PC-3 (cell line): ENCODE measurements at regions of chr14 and their contacts with region 1.

Region 1: GRCh38 chr14:58199726-58200479 is at the start of gene ACTR10:
- DNase-seq: peak; percentile 99
- ATAC-seq: peak; percentile 94
- H3K4me3 ChIP-seq: peak within 1 kb of the TSS; percentile 88
- H3K27ac ChIP-seq: peak within 1 kb of the TSS; percentile 55
- H3K4me1 ChIP-seq: peaks cover 15% of the 10 kb centered on the region; the same call in 1 of the 2 replicates
- H3K27me3 ChIP-seq: peaks cover 10% of the 10 kb centered on the region; the same call in 1 of the 2 replicates
- CTCF ChIP-seq: no peak
- total RNA-seq, gene ACTR10: 118 and 126 TPM in 2 replicates

Region 2: DNA sequence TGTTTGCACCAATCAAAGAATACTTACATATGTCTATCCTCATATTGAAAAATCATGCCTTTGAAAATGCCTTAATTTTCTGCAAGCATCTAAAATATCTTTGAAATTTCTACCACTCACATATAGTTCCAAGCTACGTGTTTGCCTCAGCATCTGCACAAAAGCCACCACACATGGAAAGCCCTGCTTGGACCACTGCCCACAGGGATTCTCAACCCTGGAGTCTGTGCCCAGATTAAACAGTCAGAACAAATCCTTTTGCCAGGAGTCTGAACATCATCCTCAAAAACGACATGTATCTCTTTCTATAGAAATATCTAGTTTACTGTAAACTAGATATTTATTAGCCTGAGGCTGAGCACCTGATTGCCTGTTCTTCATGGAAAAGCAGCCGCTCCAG is 80.5 kb before region 1 on chr14:
- CTCF ChIA-PET with region 1: no interaction called
- POLR2A ChIA-PET with region 1: no interaction called
- intact Hi-C with region 1: no loop called
- DNase-seq: no peak
- ATAC-seq: no peak
- H3K4me3 ChIP-seq: no peak overlapping the region
- H3K27ac ChIP-seq: no peak overlapping the region
- H3K4me1 ChIP-seq: peaks cover 23% of the 10 kb centered on the region
- H3K27me3 ChIP-seq: peaks cover under 1% of the 10 kb centered on the region; the same call in 1 of the 2 replicates
- CTCF ChIP-seq: no peak

Region 3: DNA sequence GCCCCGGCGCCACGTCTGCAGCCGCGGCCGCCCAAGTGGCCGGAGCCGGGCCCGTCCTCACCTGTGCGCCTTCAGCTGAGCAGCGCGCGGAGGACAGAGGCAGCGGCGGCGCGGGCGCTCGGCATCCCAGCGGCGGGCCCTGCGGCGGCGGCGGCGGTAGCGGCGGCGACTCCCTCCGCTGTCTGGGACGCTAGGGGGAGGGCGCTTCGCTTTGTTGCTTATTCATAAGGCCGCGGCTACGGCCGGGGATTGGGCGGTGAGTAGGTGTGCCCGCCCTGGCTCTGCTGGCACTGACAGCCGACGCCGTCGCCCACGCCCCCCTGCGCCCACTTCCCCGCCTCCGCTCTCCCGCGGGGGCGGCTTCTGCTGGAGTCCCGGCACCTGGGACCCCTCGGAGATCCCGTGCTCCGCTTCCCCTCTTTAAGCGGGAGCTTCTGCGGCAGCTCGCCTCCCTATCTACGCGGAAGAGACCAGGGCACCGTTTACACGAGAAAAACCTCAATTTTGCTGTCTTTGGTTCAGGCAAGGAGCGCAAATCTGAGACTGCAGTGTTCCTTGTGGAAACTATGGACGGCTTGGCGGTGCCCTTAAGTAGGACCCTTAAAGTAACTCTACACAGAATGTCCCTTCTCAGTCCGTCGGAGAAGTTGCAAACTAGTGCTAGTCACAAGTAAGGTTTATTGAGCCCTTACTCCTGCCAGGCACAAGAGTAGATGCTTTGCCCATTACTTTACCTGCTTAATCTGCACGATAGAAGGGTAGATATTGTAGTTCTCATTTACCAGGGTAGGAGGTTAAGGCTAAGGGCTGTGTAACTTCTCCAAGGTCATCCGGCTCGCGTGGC is 47.7 kb before region 1 on chr14 and contains the start of gene ARMH4:
- CTCF ChIA-PET with region 1: no interaction called
- POLR2A ChIA-PET with region 1: no interaction called
- intact Hi-C with region 1: loop called (anchors 2 kb)
- DNase-seq: peak; percentile 98
- ATAC-seq: peak; percentile 95
- H3K4me3 ChIP-seq: peak within 1 kb of the TSS; percentile 73
- H3K27ac ChIP-seq: no peak within 1 kb of the TSS
- H3K4me1 ChIP-seq: peaks cover 12% of the 10 kb centered on the region
- H3K27me3 ChIP-seq: peaks cover 47% of the 10 kb centered on the region
- CTCF ChIP-seq: no peak; the same call in 1 of the 2 replicates
- total RNA-seq, gene ARMH4: 2.6 and 3.3 TPM in 2 replicates

Region 4: DNA sequence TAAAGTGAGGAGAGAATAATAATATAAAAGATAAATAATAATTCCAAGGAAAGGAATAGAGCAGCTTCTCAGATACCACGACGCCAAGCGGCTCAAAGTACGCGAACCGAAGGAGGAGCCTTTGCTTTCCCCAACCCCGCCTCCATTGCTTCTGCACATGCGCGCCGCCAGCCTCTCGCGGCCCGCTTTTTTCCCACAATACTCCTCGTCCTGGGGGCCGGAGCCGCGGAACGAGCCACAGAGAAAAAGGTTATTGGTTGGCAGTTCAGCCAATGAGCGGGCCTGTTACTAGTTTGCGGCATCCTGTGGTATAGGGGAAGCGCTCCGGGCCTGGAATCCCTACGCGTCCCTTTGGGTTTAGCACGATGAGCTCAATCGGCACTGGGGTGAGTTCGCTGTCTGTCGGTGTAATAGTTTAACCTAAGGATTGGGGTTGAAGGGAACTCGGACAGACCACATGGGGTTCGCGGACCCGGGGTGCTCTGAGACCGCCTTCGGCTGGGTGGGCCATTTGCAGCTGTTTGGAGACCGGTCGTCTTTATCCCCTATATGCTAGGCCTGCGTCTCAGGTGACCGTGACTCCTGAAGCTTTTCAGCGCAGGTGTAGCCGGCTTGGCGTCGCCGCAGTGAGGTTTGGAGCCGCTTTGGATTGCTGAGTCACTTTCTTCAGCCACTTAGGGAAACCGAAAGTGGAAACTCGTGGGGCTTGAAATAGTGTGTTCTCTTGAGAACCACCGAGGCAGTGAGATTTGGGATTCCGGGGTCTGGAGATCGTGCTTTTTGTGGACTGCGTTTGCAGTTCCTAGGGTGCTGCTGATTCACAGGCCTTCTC is 44.9 kb after region 1 on chr14 and contains the start of gene PSMA3:
- CTCF ChIA-PET with region 1: no interaction called
- POLR2A ChIA-PET with region 1: no interaction called
- intact Hi-C with region 1: loop called (anchors 1 kb)
- DNase-seq: peak; percentile 100
- ATAC-seq: peak; percentile 87
- H3K4me3 ChIP-seq: peak within 1 kb of the TSS; percentile 76
- H3K27ac ChIP-seq: peak within 1 kb of the TSS; percentile 87
- H3K4me1 ChIP-seq: peaks cover 25% of the 10 kb centered on the region
- H3K27me3 ChIP-seq: no peaks in the 10 kb centered on the region
- CTCF ChIP-seq: no peak
- total RNA-seq, gene PSMA3: 669 and 700 TPM in 2 replicates